ENCODE measurements at regions of chr6 and their contacts with region 1.

Region 1: DNA sequence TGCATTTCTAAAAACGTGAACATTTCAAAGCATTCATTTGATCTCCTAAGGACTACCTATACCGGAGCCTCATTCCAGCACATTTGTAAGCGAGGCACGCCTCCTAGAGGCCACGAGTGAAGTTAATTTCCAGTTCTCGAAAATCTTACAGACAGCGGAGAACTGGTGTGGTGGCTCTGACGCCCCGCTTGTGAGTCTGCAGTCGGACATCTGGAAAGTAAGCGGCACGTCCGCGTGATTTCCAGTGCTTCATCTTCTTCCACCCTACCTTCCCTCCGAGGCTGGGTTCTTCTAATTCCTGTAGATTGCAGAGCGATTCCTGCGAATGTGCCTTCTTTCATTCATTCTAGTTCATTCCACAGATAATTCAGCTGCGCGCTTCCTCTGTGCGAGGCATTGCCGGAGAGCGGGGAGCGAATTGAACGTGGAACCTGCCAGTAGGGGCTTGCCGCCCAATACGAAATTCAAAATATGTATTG is 810 bp upstream of the PRIM2 start:
- DNase-seq: peak; percentile 96

Region 2: GRCh38 chr6:56291302-56291917 is 1025.2 kb before region 1 on chr6:
- in situ Hi-C with region 1: no loop called
- DNase-seq: no peak

Region 3: DNA sequence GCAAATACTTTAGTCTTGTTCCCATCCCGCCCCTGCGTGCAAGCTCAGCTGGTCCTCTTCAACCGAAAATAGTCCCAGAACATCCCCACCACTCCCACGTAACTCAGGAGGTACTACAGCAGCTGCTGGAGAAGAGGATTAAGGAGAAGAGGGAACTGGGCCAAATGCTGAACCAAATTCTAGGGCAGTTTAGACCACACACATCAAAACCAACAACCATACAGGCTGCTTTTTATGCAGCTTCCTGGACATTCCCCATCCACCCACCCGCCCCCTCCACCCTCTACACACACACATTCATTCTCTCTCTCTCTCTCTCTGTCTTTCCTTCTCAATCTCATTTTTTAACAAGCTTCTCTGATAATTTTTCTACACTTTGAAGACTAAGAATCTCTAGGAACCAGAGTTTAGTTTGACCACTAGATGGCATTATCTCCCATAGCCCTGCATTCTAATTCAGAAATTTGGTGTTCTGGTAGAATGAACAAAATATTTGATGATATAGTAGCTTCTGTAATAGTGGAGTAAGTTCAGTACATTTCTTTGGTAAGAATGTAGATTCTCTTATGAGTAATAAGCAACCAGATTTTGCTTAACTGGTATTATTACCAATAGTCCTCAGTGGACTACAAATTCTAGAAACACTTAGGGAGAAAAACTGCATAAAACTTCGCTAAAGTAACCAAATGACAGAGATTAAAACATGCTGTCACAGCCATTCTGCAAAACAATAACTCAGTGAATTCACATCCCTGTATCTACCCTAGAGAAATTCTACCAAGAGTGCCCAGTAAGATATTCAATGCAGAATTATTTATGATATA is 413.8 kb before region 1 on chr6:
- in situ Hi-C with region 1: loop called (anchors 25 kb)
- DNase-seq: peak; percentile 57

Region 4: GRCh38 chr6:57029188-57029587 is 287.4 kb before region 1 on chr6:
- in situ Hi-C with region 1: no loop called
- DNase-seq: no peak

Region 5: GRCh38 chr6:57135885-57136284 is 180.7 kb before region 1 on chr6:
- in situ Hi-C with region 1: no loop called
- DNase-seq: no peak